ENCODE measurements at regions of chr22 and their contacts with region 1.

Region 1: DNA sequence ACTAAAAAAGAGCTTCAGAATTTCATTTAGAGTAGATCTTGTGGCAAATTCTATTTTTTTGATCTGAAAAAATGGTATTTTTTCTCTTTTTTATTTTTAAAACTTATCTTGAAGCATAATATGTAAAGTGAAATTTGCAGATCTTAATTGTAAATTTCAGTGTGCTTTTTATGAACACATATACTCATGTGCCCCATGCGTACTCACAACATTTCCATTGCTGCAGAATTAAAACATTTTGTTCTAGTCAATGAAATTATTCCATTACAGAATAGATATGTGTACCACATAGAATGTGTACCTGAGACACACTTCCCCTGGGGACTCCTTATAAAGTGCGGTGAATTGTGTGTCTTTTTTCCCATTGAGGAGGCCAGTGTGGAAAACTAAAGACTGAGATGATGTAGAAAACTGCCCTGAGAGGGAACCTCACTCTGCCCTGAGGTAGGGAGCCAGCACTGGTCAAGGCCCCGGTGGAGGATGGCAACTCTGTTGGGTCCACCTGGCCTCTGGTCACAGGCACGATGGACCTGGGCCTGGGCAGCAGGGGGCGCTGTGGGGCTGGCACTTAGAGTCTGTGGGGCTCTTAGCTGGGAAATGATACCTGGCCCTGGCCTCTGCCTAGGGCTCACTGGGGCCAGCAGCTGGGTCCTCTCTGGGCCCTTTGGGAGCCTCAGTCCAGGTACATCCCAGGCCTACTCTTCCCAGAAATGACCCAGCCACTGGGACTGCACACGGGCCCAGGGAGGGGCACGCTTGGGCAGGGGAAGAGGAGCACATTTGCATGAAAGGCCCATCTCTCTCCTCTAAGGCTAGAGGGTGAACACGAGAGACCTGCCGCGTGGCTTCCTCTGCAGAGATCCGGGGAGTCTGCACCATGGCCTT is 77.9 kb upstream of the TOP3B start:
- DNase-seq: peak; percentile 22
- ATAC-seq: peak; percentile 99
- H3K4me3 ChIP-seq: no peak overlapping the region
- H3K27ac ChIP-seq: no peak overlapping the region
- H3K4me1 ChIP-seq: no peaks in the 10 kb centered on the region; a peak in 1 of 4 replicates
- H3K27me3 ChIP-seq: peaks cover 8% of the 10 kb centered on the region; the same call in 1 of the 2 replicates
- CTCF ChIP-seq: peak; percentile 45 to 95 (median 88); a peak in 5 of 6 replicates
- POLR2A ChIP-seq: no peak
- RAD21 ChIP-seq: peak; percentile 48; the same call in 1 of the 2 replicates

Region 2: DNA sequence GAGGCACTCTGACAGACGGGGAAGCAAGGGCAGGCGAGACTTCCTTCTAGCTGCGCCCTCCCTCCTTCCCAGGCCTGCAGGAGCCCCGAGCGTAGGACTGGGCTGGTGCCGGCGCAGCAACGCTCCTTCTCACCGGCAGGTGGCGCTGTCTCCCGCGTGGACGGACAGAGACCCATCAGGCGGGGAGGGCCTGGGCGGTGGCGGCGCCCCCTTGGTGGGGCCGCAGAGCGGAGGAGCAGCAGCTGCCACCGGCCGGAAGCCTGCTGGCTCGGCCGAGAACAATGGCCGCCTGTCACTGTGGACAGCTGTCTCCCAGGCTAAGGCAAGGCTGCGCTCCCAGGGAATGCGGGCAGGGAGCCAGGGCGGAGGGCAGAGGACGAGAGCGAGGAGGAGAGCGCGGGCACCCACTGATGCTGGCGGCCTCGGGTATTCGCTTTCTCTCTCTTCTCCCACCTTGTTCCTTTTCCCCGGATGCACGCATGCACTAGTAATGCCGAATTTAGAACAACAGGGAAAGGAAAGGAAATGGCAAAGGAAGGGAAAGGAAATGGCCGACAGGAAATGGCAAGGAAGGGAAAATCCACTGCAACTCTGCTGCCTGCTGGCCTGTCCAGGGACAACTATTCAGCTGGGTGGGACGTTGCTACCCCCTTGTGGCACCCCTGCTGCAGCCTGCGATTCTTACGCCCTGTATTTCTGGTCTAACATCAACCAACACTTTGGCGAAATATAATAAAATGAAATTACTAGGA is 122.2 kb before region 1 on chr22:
- CTCF ChIA-PET with region 1: no interaction called
- POLR2A ChIA-PET with region 1: no interaction called
- RAD21 ChIA-PET with region 1: no interaction called
- intact Hi-C with region 1: no loop called
- DNase-seq: peak; percentile 69
- ATAC-seq: peak; percentile 91
- H3K4me3 ChIP-seq: peak overlapping the region; percentile 52 to 58
- H3K27ac ChIP-seq: peak overlapping the region; percentile 91
- H3K4me1 ChIP-seq: peaks cover 25 to 44% of the 10 kb centered on the region in 2 experiments
- H3K27me3 ChIP-seq: no peaks in the 10 kb centered on the region
- CTCF ChIP-seq: peak; percentile 93 to 98 (median 94)
- POLR2A ChIP-seq: no peak
- RAD21 ChIP-seq: peak; percentile 81

Region 3: DNA sequence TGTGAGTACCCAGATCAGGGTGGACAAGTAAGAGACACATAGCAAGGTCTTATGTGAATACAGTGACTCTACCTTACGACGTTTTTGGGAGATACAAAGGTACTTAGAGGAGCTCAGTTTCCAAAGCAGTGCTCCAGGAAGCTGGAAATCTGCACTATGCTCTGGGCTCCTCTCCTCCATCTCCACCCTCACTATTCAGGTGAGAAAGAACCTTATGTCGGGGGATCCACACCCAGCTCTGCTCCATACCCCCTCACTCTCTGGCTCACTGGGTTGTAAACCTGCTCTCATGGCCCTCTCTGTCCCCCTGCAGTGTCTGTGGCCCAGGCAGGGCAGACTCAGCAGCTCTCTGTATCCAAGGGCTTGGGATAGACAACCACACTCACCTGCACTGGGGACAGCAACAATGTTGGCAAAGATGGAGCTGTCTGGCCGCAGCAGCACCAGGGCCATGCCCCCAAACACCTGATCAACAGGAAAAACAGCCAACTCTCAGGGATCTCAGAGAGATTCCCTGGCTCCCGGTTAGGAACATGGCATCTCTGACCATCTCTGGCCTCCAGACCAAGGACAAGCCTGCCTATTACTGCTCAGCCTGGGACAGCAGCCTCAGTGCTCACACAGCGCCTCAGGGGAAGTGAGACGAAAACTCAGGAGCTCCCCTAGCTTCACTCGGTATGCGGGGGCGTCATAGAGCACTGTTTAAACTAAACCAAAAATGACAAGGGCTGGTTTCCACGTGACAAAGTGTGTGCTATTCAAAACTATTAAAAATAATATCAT is 17.0 kb before region 1 on chr22:
- CTCF ChIA-PET with region 1: interaction called, 19 read pairs
- POLR2A ChIA-PET with region 1: no interaction called
- RAD21 ChIA-PET with region 1: no interaction called
- intact Hi-C with region 1: no loop called
- DNase-seq: no peak
- ATAC-seq: no peak
- H3K4me3 ChIP-seq: no peak overlapping the region
- H3K27ac ChIP-seq: no peak overlapping the region
- H3K4me1 ChIP-seq: no peaks in the 10 kb centered on the region
- H3K27me3 ChIP-seq: no peaks in the 10 kb centered on the region
- CTCF ChIP-seq: no peak
- POLR2A ChIP-seq: no peak
- RAD21 ChIP-seq: no peak

Region 4: GRCh38 chr22:22110548-22111266 is 50.3 kb after region 1 on chr22:
- CTCF ChIA-PET with region 1: interaction called, 10 read pairs
- POLR2A ChIA-PET with region 1: no interaction called
- RAD21 ChIA-PET with region 1: no interaction called
- intact Hi-C with region 1: no loop called
- DNase-seq: peak; percentile 46
- ATAC-seq: peak; percentile 99
- H3K4me3 ChIP-seq: no peak overlapping the region
- H3K27ac ChIP-seq: no peak overlapping the region
- H3K4me1 ChIP-seq: peaks cover 4 to 12% of the 10 kb centered on the region in 2 experiments; a peak in 3 of 4 replicates
- H3K27me3 ChIP-seq: no peaks in the 10 kb centered on the region
- CTCF ChIP-seq: peak; percentile 24 to 79 (median 69); a peak in 4 of 6 replicates
- POLR2A ChIP-seq: no peak
- RAD21 ChIP-seq: peak; percentile 36; the same call in 1 of the 2 replicates

Region 5: GRCh38 chr22:22348127-22348814 is 287.8 kb after region 1 on chr22:
- CTCF ChIA-PET with region 1: no interaction called
- POLR2A ChIA-PET with region 1: no interaction called
- RAD21 ChIA-PET with region 1: no interaction called
- intact Hi-C with region 1: no loop called
- DNase-seq: peak; percentile 26
- ATAC-seq: peak; percentile 95
- H3K4me3 ChIP-seq: no peak overlapping the region
- H3K27ac ChIP-seq: no peak overlapping the region
- H3K4me1 ChIP-seq: peaks cover 3 to 5% of the 10 kb centered on the region in 2 experiments; a peak in 2 of 4 replicates
- H3K27me3 ChIP-seq: peaks cover 25% of the 10 kb centered on the region
- CTCF ChIP-seq: peak; percentile 31 to 49 (median 42); a peak in 5 of 6 replicates
- POLR2A ChIP-seq: no peak
- RAD21 ChIP-seq: no peak